ENCODE measurements at regions of chr21 and their contacts with region 1.

Region 1: DNA sequence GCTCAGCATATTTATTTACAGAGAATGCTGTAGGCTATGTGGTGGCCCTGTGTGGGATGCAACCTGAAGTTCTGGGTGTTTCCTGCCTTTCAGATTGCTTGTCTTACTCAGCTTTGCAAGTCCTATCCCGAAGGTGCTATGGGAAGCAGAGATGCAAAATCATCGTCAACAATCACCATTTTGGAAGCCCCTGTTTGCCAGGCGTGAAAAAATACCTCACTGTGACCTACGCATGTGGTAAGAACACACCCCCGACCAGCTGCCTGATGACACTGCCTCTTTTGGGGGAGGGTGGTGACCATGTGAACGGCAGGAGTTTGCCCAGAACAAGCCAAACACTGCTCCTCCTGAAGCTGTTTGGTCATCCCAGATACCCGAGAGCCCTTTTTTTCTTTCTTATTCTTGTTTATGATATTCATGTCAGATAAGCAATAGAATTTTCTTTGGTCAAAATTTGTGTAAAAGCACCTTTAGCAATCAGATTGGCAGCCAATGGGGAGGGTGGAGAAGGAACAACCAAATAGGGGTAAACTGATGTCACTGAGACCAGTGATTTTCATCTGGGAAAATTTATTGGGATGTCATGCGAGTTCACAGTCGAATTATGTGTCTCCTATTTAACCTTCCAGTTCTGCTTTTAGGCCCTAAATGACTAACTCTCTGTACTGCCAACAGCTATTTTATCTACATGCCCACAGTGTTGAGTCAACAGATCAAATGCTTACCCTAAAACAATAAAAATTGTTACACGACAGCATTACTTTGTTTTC is 82.6 kb downstream of the EVA1C start:
- DNase-seq: peak; percentile 91
- H3K4me3 ChIP-seq: no peak overlapping the region
- H3K27ac ChIP-seq: peak overlapping the region; percentile 95
- H3K4me1 ChIP-seq: peaks cover 73% of the 10 kb centered on the region
- H3K27me3 ChIP-seq: no peaks in the 10 kb centered on the region
- CTCF ChIP-seq: no peak
- POLR2A ChIP-seq: peak; percentile 20

Region 2: DNA sequence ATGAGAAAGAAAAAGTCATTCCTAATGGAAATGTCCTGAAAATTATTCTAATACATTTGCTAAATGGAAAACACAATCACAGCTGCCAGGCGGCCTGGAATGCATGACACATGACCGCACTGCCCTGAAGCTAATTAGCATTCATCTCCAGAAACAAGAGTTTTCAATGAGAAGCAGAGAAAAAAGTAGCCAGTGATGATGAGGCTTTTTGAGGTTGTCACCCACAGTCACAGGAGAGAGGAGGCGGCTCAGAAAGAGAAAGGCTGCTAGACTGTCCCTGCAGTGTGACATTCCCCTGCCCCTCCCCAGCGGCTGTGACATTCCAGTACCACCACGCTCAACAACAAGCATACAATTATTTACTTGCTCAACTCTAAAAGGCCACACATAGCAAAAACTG is 1334.0 kb before region 1 on chr21:
- CTCF ChIA-PET with region 1: no interaction called
- POLR2A ChIA-PET with region 1: no interaction called
- dilution Hi-C with region 1: no loop called
- intact Hi-C with region 1: no loop called
- DNase-seq: no peak
- H3K4me3 ChIP-seq: no peak overlapping the region
- H3K27ac ChIP-seq: no peak overlapping the region
- H3K4me1 ChIP-seq: no peaks in the 10 kb centered on the region
- H3K27me3 ChIP-seq: peaks cover 0 to 4% of the 10 kb centered on the region in 2 experiments
- CTCF ChIP-seq: no peak
- POLR2A ChIP-seq: no peak

Region 3: DNA sequence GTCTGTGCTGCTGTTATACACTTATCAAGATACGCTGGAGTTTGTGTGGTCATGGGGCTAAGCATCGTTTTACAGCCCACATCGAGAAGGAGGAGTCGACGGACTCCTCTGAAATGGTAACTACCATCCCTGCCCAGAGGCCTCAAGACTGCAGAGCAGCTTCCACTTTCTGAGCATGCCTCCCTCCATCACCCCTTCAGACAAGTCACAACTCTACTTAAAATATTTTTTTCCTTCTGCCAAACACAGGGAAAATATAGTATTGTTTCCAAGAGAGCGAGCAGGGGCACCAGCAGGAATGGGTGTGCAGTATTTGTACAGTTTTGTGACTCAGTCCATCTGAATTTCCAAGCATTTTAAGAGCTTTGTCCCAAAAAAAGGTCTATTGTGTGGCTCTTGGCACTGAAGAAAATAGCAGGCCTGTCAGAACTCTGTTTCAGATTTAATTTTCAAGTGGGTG is 68.5 kb before region 1 on chr21:
- CTCF ChIA-PET with region 1: interaction called, 3 read pairs
- POLR2A ChIA-PET with region 1: interaction called, 4 read pairs
- dilution Hi-C with region 1: no loop called
- intact Hi-C with region 1: loop called (anchors 5 kb)
- DNase-seq: peak; percentile 73
- H3K4me3 ChIP-seq: no peak overlapping the region
- H3K27ac ChIP-seq: peak overlapping the region; percentile 68
- H3K4me1 ChIP-seq: peaks cover 34% of the 10 kb centered on the region
- H3K27me3 ChIP-seq: no peaks in the 10 kb centered on the region
- CTCF ChIP-seq: no peak
- POLR2A ChIP-seq: no peak

Region 4: GRCh38 chr21:32463889-32464300 is 31.2 kb before region 1 on chr21:
- CTCF ChIA-PET with region 1: interaction called, 5 read pairs
- POLR2A ChIA-PET with region 1: no interaction called
- dilution Hi-C with region 1: no loop called
- intact Hi-C with region 1: loop called (anchors 1 kb)
- DNase-seq: peak; percentile 95
- H3K4me3 ChIP-seq: no peak overlapping the region
- H3K27ac ChIP-seq: peak overlapping the region; percentile 99
- H3K4me1 ChIP-seq: peaks cover 28% of the 10 kb centered on the region
- H3K27me3 ChIP-seq: no peaks in the 10 kb centered on the region
- CTCF ChIP-seq: no peak
- POLR2A ChIP-seq: peak; percentile 26

Region 5: GRCh38 chr21:32545948-32546441 is 50.9 kb after region 1 on chr21:
- CTCF ChIA-PET with region 1: no interaction called
- POLR2A ChIA-PET with region 1: no interaction called
- dilution Hi-C with region 1: no loop called
- intact Hi-C with region 1: loop called (anchors 1 kb)
- DNase-seq: peak; percentile 38
- H3K4me3 ChIP-seq: no peak overlapping the region
- H3K27ac ChIP-seq: peak overlapping the region; percentile 96
- H3K4me1 ChIP-seq: peaks cover 22% of the 10 kb centered on the region
- H3K27me3 ChIP-seq: no peaks in the 10 kb centered on the region
- CTCF ChIP-seq: no peak
- POLR2A ChIP-seq: no peak